Activated CD4-positive, alpha-beta memory T cell treated with anti-CD3 and anti-CD28 coated beads for 36 hours (primary cell): ENCODE measurements at regions of chr10 and their contacts with region 1.

Region 1: GRCh38 chr10:130179640-130180039 is 43.4 kb downstream of the GLRX3 start:
- DNase-seq: peak; percentile 53
- H3K4me3 Mint-ChIP-seq: no peak overlapping the region
- H3K27ac Mint-ChIP-seq: peak overlapping the region; percentile 42
- H3K4me1 Mint-ChIP-seq: peaks cover 20% of the 10 kb centered on the region
- H3K27me3 Mint-ChIP-seq: no peaks in the 10 kb centered on the region

Region 2: GRCh38 chr10:129466703-129467358 is 712.8 kb before region 1 on chr10 and contains the start of gene MGMT:
- CTCF ChIA-PET with region 1: no interaction called
- POLR2A ChIA-PET with region 1: no interaction called
- intact Hi-C with region 1: loop called (anchors 1 kb)
- DNase-seq: peak; percentile 99
- H3K4me3 Mint-ChIP-seq: peak within 1 kb of the TSS; percentile 75
- H3K27ac Mint-ChIP-seq: peak within 1 kb of the TSS; percentile 56
- H3K4me1 Mint-ChIP-seq: peaks cover 11% of the 10 kb centered on the region
- H3K27me3 Mint-ChIP-seq: peaks cover 3% of the 10 kb centered on the region
- total RNA-seq, gene MGMT: 22.9 to 23.8 TPM

Region 3: GRCh38 chr10:129971381-129972144 is 208.1 kb before region 1 on chr10:
- CTCF ChIA-PET with region 1: no interaction called
- POLR2A ChIA-PET with region 1: no interaction called
- intact Hi-C with region 1: loop called (anchors 2 kb)
- DNase-seq: peak; percentile 68
- H3K4me3 Mint-ChIP-seq: peak overlapping the region; percentile 4
- H3K27ac Mint-ChIP-seq: peak overlapping the region; percentile 43
- H3K4me1 Mint-ChIP-seq: peaks cover 16% of the 10 kb centered on the region
- H3K27me3 Mint-ChIP-seq: peaks cover 69% of the 10 kb centered on the region

Region 4: DNA sequence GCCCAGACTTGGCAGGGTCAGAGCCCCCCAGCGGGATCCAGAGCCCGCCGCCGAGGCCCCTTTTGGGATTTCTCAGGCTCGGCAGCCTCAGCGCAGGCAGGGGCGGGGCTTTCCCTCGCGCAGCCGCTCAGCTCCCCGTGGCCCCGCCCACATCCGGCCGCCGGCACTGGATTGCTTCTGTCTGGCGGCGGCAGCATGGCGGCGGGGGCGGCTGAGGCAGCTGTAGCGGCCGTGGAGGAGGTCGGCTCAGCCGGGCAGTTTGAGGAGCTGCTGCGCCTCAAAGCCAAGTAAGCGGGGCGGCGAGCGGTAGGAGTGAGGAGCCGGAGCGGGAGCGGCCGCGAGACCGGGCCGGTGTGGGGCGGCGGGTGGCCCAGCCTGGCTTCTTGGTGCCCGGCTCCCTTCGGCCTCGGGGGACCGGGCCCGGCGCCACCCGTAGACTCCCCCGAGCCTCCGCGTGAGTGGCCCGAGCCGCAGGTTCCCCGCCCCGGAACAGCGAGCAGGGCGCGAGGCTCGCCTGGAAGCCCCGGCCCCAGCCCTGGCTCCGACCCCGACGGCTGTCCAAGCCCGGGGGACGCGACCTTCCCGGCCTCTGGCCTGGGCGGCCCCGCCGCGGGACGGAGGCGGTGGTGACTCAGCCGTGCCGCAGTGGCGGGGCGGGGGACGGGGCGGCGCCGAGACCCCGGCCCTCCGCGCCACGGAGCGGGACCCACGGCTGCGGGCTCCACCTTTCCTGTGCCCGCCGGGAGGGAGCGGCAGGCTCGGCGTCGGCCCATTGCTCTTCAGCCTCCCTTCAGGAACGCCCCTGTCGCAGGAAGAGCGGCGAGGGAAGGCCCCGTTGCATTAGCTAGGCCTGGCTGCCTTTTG is 43.2 kb before region 1 on chr10 and contains the start of gene GLRX3:
- CTCF ChIA-PET with region 1: interaction called, 4 read pairs
- POLR2A ChIA-PET with region 1: interaction called, 3 read pairs
- intact Hi-C with region 1: loop called (anchors 1 kb)
- DNase-seq: peak; percentile 90
- H3K4me3 Mint-ChIP-seq: peak within 1 kb of the TSS; percentile 88
- H3K27ac Mint-ChIP-seq: peak within 1 kb of the TSS; percentile 83
- H3K4me1 Mint-ChIP-seq: peaks cover 42% of the 10 kb centered on the region
- H3K27me3 Mint-ChIP-seq: peaks cover 2% of the 10 kb centered on the region
- total RNA-seq, gene GLRX3: 112 to 113 TPM